Activated B cell treated with CpG ODN at 0.5 μM for 24 hours (primary cell): ENCODE measurements at regions of chr17 and their contacts with region 1.

Region 1: DNA sequence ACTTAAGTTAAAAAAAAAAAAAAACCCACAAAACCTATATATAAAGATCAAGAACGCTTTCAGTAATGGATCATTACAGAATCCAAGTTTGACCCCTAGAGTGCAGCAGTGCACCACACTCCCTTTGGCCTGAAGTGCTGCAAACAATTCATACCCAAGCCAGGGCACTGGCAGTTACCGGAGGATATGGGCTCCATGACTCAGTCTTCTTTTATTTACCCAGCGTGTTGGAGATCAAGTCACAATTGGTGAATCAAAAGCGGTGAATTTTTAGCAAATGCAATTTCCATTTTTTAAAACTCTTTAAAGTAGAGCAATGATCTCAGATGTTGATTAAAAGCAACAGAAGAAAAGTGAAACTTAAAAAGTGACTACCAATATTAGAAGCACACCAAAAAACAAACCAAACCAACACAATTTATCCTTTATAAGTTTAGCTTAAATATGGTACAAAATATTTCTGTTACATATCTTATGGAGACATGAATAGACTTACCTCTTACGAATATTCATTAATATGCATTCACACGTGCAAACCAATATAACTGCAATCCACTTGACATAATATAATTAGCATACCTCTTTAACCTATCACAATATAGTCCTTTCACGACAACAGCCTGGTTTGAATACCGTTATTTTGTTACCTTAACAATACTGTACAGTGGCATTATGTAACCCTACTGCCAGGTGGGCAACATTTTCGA is 46.3 kb downstream of the ZNF652 start:
- DNase-seq: peak; percentile 38
- ATAC-seq: peak; percentile 96
- H3K4me3 Mint-ChIP-seq: peak overlapping the region; percentile 82
- H3K27ac Mint-ChIP-seq: peak overlapping the region; percentile 74
- H3K4me1 Mint-ChIP-seq: peaks cover 26% of the 10 kb centered on the region
- H3K27me3 Mint-ChIP-seq: no peaks in the 10 kb centered on the region
- CTCF ChIP-seq: peak; percentile 73

Region 2: DNA sequence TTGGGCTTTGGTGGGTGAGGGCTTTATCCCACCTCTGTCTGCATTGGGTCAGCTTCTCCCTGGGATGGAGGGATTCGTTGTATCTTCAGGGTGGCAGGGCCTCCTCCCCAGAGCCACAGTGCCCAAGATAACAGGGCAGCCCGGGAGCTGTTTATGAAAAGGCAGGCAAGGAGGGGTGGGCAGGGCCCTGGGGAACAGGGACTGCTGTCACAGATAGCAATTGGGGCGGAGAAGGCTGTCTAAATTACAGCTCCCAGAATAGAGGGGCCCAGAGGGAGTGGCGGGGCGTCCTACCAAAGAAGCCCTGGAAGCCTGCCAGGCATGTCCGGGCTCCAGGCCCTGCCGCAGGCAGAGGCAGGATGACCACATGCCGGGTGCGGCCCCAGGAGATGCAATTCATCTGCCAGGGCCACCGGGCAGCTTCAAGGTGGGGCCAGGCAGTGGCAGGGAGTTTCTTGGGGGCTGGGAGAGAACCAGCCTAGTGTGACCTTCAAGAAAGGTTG is 66.4 kb before region 1 on chr17:
- CTCF ChIA-PET with region 1: no interaction called
- POLR2A ChIA-PET with region 1: no interaction called
- intact Hi-C with region 1: no loop called
- DNase-seq: no peak
- ATAC-seq: no peak
- H3K4me3 Mint-ChIP-seq: no peak overlapping the region
- H3K27ac Mint-ChIP-seq: no peak overlapping the region
- H3K4me1 Mint-ChIP-seq: no peaks in the 10 kb centered on the region
- H3K27me3 Mint-ChIP-seq: peaks cover 29% of the 10 kb centered on the region
- CTCF ChIP-seq: no peak

Region 3: DNA sequence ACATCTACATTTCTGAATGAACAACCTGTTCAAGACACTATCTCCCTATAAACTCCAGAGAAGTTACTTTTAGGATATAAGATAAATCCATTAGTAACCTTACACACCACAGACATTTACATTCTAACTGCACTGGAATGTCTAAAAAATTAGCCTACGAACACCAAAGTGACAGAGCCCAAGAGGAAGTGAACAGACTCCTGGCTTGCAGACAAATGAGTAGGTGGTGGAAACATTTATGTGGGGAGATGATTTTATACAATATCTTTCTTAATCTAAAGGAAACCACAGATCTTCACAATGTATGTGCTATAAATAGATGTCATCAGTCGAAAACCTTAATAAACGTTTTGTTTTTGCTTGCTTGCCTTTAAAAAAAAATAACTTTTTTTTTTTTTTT is 27.6 kb after region 1 on chr17:
- CTCF ChIA-PET with region 1: interaction called, 19 read pairs
- POLR2A ChIA-PET with region 1: interaction called, 13 read pairs
- intact Hi-C with region 1: loop called (anchors 1 kb)
- DNase-seq: no peak
- ATAC-seq: peak; percentile 30
- H3K4me3 Mint-ChIP-seq: peak overlapping the region; percentile 72
- H3K27ac Mint-ChIP-seq: peak overlapping the region; percentile 89
- H3K4me1 Mint-ChIP-seq: peaks cover 65% of the 10 kb centered on the region
- H3K27me3 Mint-ChIP-seq: no peaks in the 10 kb centered on the region
- CTCF ChIP-seq: no peak

Region 4: DNA sequence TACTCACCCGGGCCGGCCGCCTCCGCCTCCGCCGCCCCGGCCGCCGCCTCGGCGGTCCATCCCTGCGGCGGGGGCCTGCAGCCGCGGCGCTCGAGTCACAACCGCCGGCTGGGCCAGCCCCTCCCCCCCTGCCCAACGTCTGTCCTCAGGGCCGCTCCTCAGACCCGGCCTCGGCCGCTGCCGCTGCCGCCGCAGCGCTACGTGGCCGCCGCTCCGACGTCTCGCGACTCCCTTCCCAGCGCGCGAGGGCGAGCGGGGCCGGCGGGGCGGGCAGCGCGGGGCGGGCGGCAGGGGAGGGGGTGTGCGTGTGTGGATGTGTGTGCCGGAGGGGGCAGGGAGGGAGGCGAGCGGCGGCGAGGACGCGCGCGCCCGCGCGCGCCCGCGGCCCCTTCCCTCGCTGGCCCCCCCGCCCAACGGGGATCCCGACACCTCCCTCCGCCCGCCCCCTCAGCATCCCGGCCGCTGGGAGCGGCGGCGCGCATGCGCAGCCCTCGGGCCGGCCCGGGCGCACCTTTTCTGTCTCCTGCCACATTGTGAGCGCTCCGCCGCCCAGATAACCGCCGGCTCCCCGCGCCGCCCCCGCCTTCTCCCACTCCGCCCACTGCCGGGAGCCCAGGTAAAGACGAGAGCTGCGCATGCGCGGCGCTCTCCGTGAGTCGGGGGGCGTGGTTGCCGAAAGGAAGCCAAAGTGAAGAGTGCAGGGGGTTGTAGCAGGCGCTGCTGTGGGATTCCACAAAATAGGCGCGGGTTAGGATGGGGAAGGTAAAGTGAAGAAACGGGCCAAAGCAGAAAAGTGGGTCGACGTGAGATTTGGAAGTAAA is 46.4 kb after region 1 on chr17 and contains the start of gene ZNF652:
- CTCF ChIA-PET with region 1: interaction called, 31 read pairs
- POLR2A ChIA-PET with region 1: interaction called, 38 read pairs
- intact Hi-C with region 1: loop called (anchors 1 kb)
- DNase-seq: peak; percentile 95
- ATAC-seq: peak; percentile 69
- H3K4me3 Mint-ChIP-seq: peak within 1 kb of the TSS; percentile 96
- H3K27ac Mint-ChIP-seq: peak within 1 kb of the TSS; percentile 96
- H3K4me1 Mint-ChIP-seq: peaks cover 61% of the 10 kb centered on the region
- H3K27me3 Mint-ChIP-seq: no peaks in the 10 kb centered on the region
- CTCF ChIP-seq: no peak
- total RNA-seq, gene ZNF652: 37.1 and 40.6 TPM in 2 replicates

Region 5: GRCh38 chr17:49370971-49371834 is 55.5 kb after region 1 on chr17:
- CTCF ChIA-PET with region 1: interaction called, 49 read pairs
- POLR2A ChIA-PET with region 1: no interaction called
- intact Hi-C with region 1: loop called (anchors 1 kb)
- DNase-seq: no peak
- ATAC-seq: no peak
- H3K4me3 Mint-ChIP-seq: no peak overlapping the region
- H3K27ac Mint-ChIP-seq: no peak overlapping the region
- H3K4me1 Mint-ChIP-seq: peaks cover 63% of the 10 kb centered on the region
- H3K27me3 Mint-ChIP-seq: no peaks in the 10 kb centered on the region
- CTCF ChIP-seq: no peak

Region 6: DNA sequence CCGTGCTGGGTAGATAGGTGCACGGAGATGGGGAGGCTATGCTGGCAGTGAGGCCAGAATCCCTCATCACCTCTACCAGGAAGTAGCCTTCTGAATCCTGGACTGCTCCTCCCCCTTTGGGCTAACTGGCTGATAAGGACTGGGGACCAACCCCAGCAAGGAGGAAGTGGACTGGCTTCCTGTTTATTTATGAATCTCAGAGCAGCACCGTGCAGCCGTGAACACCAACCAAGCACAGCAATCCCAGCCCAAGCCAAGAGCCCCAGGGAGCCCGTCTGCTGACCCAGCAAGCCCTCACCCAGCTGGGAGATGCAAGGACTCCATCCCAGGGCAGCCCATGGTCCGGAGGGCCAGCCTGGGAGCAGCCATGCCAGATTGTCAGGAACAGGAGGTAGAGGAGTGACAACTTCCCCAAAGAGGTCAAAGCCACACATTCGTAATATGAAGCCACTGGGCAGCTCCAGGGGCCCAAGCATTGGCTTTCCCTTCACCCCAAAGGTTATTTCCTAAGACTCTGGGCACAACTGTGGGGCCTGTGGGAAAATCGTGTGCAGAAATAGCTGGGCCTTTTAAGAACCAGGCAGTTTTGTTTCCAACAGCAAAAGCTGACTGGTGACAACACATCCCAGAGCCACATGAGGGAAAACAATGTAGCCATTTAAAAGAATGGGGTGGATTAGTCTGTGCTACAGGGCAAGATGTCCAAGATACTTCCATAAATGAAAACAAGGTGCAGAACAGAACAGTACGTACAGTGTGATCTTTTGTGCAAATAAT is 75.0 kb after region 1 on chr17:
- CTCF ChIA-PET with region 1: interaction called, 126 read pairs
- POLR2A ChIA-PET with region 1: interaction called, 14 read pairs
- intact Hi-C with region 1: loop called (anchors 1 kb)
- DNase-seq: peak; percentile 29
- ATAC-seq: peak; percentile 51
- H3K4me3 Mint-ChIP-seq: peak overlapping the region; percentile 77
- H3K27ac Mint-ChIP-seq: peak overlapping the region; percentile 98
- H3K4me1 Mint-ChIP-seq: peaks cover 77% of the 10 kb centered on the region
- H3K27me3 Mint-ChIP-seq: no peaks in the 10 kb centered on the region
- CTCF ChIP-seq: no peak

Region 7: GRCh38 chr17:49556223-49556971 is 240.7 kb after region 1 on chr17:
- CTCF ChIA-PET with region 1: interaction called, 21 read pairs
- POLR2A ChIA-PET with region 1: no interaction called
- intact Hi-C with region 1: loop called (anchors 1 kb)
- DNase-seq: peak; percentile 86
- ATAC-seq: peak; percentile 98
- H3K4me3 Mint-ChIP-seq: no peak overlapping the region
- H3K27ac Mint-ChIP-seq: peak overlapping the region; percentile 35
- H3K4me1 Mint-ChIP-seq: no peaks in the 10 kb centered on the region
- H3K27me3 Mint-ChIP-seq: peaks cover 8% of the 10 kb centered on the region
- CTCF ChIP-seq: peak; percentile 40